ENCODE measurements at regions of chr16 and their contacts with region 1.

Region 1: GRCh38 chr16:7964744-7965143 is 625.6 kb downstream of the TMEM114 start:
- DNase-seq: no peak
- H3K4me3 ChIP-seq: no peak overlapping the region
- H3K27ac ChIP-seq: no peak overlapping the region
- H3K4me1 ChIP-seq: no peaks in the 10 kb centered on the region
- H3K27me3 ChIP-seq: no peaks in the 10 kb centered on the region
- CTCF ChIP-seq: no peak
- POLR2A ChIP-seq: no peak

Region 2: GRCh38 chr16:7584561-7584960 is 380.2 kb before region 1 on chr16:
- intact Hi-C with region 1: no loop called
- DNase-seq: no peak
- H3K4me3 ChIP-seq: no peak overlapping the region
- H3K27ac ChIP-seq: no peak overlapping the region
- H3K4me1 ChIP-seq: no peaks in the 10 kb centered on the region
- H3K27me3 ChIP-seq: no peaks in the 10 kb centered on the region
- CTCF ChIP-seq: no peak
- POLR2A ChIP-seq: no peak

Region 3: DNA sequence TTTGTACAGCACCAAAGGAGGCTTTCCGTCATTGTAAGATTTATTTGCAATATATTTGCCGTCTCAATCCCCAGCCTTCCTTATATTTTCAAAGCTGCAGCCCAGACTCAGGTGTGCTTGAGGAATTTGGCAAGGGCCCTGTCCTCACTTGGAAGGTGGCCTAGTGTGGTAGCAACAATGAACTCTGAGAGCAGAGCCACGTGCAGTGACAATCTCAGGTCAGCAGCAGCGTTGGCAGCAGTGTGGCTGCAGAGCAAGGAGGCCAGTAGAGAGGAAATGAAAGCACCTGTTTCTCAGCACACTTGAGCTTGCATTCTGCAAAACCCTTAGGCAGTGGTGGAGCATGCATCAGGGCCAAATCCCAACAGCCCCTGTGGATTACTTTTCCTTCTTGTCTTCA is 18.6 kb before region 1 on chr16:
- intact Hi-C with region 1: loop called (anchors 1 kb)
- DNase-seq: no peak
- H3K4me3 ChIP-seq: no peak overlapping the region
- H3K27ac ChIP-seq: no peak overlapping the region
- H3K4me1 ChIP-seq: no peaks in the 10 kb centered on the region
- H3K27me3 ChIP-seq: no peaks in the 10 kb centered on the region
- CTCF ChIP-seq: no peak
- POLR2A ChIP-seq: no peak

Region 4: GRCh38 chr16:8146256-8147012 is 181.7 kb after region 1 on chr16:
- intact Hi-C with region 1: no loop called
- DNase-seq: no peak
- H3K4me3 ChIP-seq: no peak overlapping the region
- H3K27ac ChIP-seq: no peak overlapping the region
- H3K4me1 ChIP-seq: no peaks in the 10 kb centered on the region
- H3K27me3 ChIP-seq: no peaks in the 10 kb centered on the region
- CTCF ChIP-seq: no peak
- POLR2A ChIP-seq: no peak

Measured in spleen (tissue), 13 donors.